MCF 10A (cell line): ENCODE measurements at regions of chr16 and their contacts with region 1.

Region 1: DNA sequence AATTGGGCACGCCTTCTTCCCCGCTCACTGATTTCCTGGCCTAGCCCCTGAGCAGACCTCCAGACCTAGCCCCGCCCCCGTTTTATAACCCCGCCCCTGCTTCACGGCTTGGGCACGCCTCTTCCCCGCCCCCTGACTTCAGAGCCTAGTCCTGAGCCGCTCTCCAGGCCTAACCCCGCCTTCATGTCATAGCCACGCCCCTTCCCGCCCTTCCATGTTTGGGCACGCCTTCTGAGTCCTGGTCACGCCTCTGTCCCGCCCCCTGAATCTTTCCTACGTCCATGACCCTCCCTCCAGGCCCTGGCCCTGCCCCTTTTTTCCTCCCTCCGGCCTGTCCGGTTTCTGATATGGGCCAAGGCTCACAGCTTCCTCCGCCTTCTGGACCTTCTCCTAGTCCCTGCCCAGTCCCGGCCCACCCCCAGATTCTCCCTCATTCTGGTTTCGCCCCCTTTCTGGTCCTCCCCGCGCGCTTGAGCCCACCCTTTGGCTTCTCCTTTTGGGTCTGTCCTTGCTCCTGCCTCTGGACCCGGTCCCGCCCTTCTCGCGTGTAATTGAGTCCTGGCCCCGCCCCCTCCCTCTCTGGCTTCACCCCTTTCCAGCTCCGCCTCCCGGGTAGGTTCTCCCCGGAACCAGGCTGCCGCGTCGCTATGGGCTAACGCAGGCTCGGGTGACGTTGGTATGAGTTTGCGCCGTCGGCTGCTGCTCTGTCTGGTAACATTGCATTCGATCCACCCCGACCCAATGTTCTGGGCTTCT is 15.1 kb upstream of the EEF2K start:
- DNase-seq: peak; percentile 99
- H3K4me3 Mint-ChIP-seq: peak overlapping the region; percentile 78
- H3K27ac Mint-ChIP-seq: peak overlapping the region; percentile 95
- H3K4me1 Mint-ChIP-seq: peaks cover 34% of the 10 kb centered on the region
- H3K27me3 Mint-ChIP-seq: no peaks in the 10 kb centered on the region
- CTCF ChIP-seq: no peak

Region 2: GRCh38 chr16:21952793-21953540 is 238.0 kb before region 1 on chr16 and contains the start of gene UQCRC2:
- CTCF ChIA-PET with region 1: interaction called, 22 read pairs
- POLR2A ChIA-PET with region 1: interaction called, 35 read pairs
- intact Hi-C with region 1: no loop called
- DNase-seq: peak; percentile 95
- H3K4me3 Mint-ChIP-seq: peak within 1 kb of the TSS; percentile 99
- H3K27ac Mint-ChIP-seq: peak within 1 kb of the TSS; percentile 99
- H3K4me1 Mint-ChIP-seq: peaks cover 7% of the 10 kb centered on the region
- H3K27me3 Mint-ChIP-seq: no peaks in the 10 kb centered on the region
- CTCF ChIP-seq: no peak
- total RNA-seq, gene UQCRC2: 199 and 207 TPM in 2 replicates

Region 3: DNA sequence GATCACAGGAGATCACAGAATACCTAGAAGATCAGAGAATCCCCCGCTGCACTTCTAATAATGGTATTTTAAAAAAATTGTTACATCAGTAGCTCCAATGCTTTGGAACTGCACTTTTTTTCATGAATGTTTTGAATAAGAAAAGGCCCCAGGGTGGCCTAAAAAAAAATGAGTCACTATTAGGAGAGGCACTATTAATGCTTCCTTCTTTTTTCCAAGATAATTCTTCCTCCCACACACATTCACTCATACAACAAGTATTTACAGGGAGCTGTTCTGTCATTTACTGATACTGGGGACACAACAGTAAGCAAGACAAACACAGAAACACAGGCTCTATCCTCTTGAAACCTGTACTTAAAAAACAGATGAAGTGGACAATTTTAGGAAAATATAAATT is 189.4 kb before region 1 on chr16:
- CTCF ChIA-PET with region 1: interaction called, 62 read pairs
- POLR2A ChIA-PET with region 1: interaction called, 50 read pairs
- intact Hi-C with region 1: loop called (anchors 1 kb)
- DNase-seq: no peak
- H3K4me3 Mint-ChIP-seq: peak overlapping the region; percentile 56
- H3K27ac Mint-ChIP-seq: no peak overlapping the region
- H3K4me1 Mint-ChIP-seq: peaks cover 22% of the 10 kb centered on the region
- H3K27me3 Mint-ChIP-seq: no peaks in the 10 kb centered on the region
- CTCF ChIP-seq: no peak

Region 4: DNA sequence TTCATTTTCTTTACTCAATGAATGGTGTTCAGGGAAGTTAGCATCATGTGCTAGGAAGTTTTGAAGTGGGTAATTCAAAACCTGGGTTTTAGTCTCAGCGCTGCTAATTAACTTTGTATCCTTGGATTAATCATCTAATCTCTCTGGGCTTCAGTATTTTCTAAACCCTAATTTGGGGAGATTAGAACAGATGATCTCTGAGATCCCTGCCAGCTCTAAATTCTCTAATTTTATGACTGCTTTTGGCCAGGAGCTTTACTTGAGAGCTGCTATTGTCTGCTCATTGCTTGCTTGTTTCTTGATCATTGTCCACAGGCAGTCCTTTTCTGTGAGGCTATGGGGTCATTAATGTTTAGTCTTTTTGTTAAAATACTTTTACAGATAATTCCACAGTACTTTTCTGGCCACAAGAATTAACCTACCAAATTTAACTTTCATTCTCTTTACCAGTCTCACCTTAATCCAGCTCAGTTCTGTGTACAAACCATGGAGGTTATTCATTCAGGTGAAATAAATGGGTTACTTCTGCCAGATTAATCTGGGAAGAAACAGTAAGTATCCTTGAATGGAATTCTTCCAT is 127.0 kb before region 1 on chr16:
- CTCF ChIA-PET with region 1: interaction called, 5 read pairs
- POLR2A ChIA-PET with region 1: interaction called, 18 read pairs
- intact Hi-C with region 1: no loop called
- DNase-seq: no peak
- H3K4me3 Mint-ChIP-seq: no peak overlapping the region
- H3K27ac Mint-ChIP-seq: no peak overlapping the region
- H3K4me1 Mint-ChIP-seq: peaks cover 23% of the 10 kb centered on the region
- H3K27me3 Mint-ChIP-seq: no peaks in the 10 kb centered on the region
- CTCF ChIP-seq: no peak

Region 5: DNA sequence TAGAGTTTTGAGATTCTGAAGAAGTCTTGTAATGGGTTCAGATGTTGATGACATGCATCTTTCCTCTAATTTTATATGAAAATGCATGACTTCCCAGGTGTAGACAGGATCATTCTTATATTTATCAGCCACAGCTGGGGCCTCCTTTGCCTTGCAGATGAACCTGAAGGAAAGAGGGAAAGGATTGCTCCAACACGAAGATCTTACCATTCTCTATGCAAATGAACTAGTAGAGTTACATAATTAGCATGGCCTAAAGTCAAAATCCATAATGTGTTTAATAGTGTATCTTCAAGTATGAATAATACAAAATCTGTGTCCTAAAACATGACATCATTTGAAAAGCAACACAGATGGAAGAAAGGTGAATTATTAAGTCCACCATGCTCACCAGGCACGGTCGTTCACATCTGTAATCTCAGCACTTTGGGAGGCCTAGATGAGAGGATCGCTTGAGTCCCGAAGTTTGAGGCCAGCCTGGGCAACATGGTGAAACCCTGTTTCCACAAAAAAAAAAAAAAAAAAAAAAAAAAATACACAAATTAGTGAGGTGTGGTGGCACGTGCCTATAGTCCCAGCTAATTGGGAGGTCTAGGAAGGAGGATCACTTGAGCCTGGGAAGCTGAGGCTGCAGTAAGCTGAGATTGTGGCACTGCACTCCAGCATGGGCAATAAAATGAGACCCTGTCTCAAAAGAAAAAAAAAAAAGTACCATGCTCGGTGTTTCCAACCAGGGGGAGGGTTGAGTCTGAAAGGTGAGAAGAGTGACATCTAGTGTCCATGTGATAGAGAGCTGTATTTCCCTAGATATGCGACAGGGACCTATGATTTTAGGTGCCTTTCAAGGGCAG is 92.3 kb before region 1 on chr16:
- CTCF ChIA-PET with region 1: interaction called, 26 read pairs
- POLR2A ChIA-PET with region 1: interaction called, 10 read pairs
- intact Hi-C with region 1: loop called (anchors 1 kb)
- DNase-seq: peak; percentile 61
- H3K4me3 Mint-ChIP-seq: peak overlapping the region; percentile 49
- H3K27ac Mint-ChIP-seq: no peak overlapping the region
- H3K4me1 Mint-ChIP-seq: no peaks in the 10 kb centered on the region
- H3K27me3 Mint-ChIP-seq: peaks cover 21% of the 10 kb centered on the region
- CTCF ChIP-seq: peak; percentile 60

Region 6: DNA sequence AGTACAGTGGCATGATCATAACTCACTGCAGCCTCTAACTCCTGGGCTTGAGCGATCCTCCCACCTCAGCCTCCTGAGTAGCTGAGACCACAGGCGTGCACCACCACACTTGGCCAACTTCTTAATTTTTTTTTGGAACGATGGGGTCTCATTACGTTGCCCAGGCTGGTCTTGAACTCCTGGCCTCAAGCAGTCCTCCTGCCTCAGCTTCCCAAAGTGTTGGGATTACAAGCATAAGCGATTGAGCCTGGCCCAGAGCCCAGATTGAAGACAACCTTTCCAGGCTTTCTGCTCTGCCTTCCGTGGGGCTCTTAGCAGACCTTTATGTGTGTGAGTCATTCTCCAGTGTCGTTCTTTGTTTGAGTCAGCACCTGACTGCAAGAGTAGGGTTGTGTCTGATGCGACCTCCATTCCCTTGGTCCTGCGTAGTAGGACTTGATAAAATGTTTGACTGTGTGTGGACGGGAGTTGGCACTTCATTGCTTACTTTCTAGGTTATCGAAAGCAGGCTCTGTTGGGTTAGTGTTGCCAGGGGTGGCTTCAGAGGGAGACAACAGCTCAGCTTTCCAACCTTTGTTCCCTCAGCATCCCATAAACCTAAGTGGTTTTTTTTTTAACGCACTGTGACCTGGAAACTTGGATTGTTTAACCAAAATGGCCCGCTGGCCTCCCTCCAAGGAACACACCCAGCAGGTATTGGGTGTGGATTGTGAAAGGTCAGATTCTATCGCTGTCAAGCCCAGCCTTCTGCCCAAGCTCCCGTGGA is 41.5 kb after region 1 on chr16:
- CTCF ChIA-PET with region 1: interaction called, 5 read pairs
- POLR2A ChIA-PET with region 1: interaction called, 17 read pairs
- intact Hi-C with region 1: no loop called
- DNase-seq: peak; percentile 91
- H3K4me3 Mint-ChIP-seq: peak overlapping the region; percentile 55
- H3K27ac Mint-ChIP-seq: peak overlapping the region; percentile 93
- H3K4me1 Mint-ChIP-seq: peaks cover 16% of the 10 kb centered on the region
- H3K27me3 Mint-ChIP-seq: no peaks in the 10 kb centered on the region
- CTCF ChIP-seq: no peak